Sciatic nerve (tissue), 2 donors: ENCODE measurements at regions of chr16 and their contacts with region 1.

Region 1: DNA sequence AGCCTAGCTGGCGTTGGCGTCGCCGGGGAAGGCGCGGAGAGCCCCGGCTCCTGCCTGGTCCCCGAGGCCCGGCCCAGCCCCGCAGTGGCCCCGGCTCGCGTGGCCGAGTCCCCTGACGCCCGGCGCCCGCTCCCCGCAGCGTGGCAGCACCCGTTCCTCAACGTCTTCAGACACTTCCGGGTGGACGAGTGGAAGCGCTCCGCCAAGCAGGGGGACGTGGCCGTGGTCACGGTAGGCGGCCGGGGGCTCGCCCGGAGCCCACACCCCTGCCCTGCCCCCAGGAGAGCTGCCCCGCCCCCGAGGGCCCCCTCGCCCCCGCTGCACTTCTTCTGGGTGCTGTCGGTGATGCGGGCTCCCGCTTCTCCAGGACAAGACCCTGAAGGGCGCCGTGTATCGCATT is 459 bp downstream of the WDR90 start:
- DNase-seq: no peak
- ATAC-seq: no peak

Region 2: DNA sequence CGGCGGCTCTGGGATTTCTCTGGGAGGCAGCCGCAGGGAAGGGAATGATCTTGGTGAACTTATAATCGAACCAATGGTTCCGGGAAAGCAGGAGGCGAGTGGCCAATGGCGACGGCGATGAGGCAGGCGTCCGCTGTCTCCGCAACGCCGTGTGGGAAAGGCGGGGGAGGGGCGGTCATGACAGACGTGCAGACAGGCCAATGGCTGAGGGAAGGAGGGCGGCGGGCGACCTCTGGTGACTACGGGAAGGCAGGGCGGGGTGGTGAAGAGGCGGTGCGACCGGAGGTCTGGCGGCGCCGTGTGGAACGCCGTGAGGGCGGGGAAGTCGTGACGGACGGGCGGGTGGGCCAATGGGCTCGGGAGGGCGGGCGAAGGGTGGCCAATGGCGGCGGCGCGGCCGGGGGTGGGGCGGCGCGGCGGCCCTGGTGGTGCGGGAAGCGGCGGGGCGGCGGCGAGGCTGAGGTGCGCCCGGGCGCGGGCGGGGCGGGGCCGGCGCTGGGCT is 59.9 kb before region 1 on chr16 and contains the start of gene RAB40C:
- intact Hi-C with region 1: loop called (anchors 10 kb)
- DNase-seq: peak; percentile 100
- ATAC-seq: peak; percentile 97
- total RNA-seq, gene RAB40C: 22.5 TPM